Natural killer cell (primary cell): ENCODE measurements at regions of chr1 and their contacts with region 1.

Region 1: DNA sequence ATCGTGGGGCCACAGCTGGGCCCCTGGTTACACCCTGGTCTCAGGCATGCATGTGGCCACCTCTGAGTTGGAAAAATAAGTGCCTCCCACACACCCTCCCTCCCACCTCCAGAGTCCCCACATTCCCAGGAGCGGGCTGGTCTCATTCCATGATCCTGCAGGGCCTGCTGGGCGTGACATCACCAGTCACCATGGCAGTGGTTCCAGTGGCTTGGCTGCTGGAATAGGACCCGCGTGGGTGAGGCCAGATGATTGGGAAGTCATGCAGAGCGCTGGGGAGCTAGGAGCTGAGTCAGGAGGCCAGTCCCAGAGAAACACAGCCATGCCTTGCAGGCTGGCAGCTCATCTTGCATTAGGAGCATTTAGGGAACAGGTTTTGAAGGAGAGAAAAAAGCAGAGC is 125.4 kb upstream of the TMEM51 start:
- DNase-seq: no peak
- ATAC-seq: no peak
- H3K4me3 ChIP-seq: no peak overlapping the region
- H3K4me3 Mint-ChIP-seq: no peak overlapping the region
- H3K27ac ChIP-seq: no peak overlapping the region
- H3K27ac Mint-ChIP-seq: no peak overlapping the region
- H3K4me1 ChIP-seq: no peaks in the 10 kb centered on the region
- H3K4me1 Mint-ChIP-seq: no peaks in the 10 kb centered on the region
- H3K27me3 ChIP-seq: no peaks in the 10 kb centered on the region
- H3K27me3 Mint-ChIP-seq: peaks cover 0 to 8% of the 10 kb centered on the region in 2 donors
- CTCF ChIP-seq: no peak

Region 2: GRCh38 chr1:14929547-14930246 is 98.4 kb before region 1 on chr1:
- intact Hi-C with region 1: loop called (anchors 10 kb)
- DNase-seq: no peak
- ATAC-seq: no peak
- H3K4me3 ChIP-seq: no peak overlapping the region
- H3K4me3 Mint-ChIP-seq: no peak overlapping the region
- H3K27ac ChIP-seq: no peak overlapping the region
- H3K27ac Mint-ChIP-seq: no peak overlapping the region
- H3K4me1 ChIP-seq: peaks cover 5% of the 10 kb centered on the region
- H3K4me1 Mint-ChIP-seq: peaks cover 5 to 9% of the 10 kb centered on the region in 2 donors
- H3K27me3 ChIP-seq: peaks cover 14% of the 10 kb centered on the region
- H3K27me3 Mint-ChIP-seq: peaks cover 28 to 35% of the 10 kb centered on the region in 2 donors
- CTCF ChIP-seq: no peak